Activated CD4-positive, alpha-beta memory T cell treated with anti-CD3 and anti-CD28 coated beads for 36 hours (primary cell): ENCODE measurements at regions of chr1 and their contacts with region 1.

Region 1: DNA sequence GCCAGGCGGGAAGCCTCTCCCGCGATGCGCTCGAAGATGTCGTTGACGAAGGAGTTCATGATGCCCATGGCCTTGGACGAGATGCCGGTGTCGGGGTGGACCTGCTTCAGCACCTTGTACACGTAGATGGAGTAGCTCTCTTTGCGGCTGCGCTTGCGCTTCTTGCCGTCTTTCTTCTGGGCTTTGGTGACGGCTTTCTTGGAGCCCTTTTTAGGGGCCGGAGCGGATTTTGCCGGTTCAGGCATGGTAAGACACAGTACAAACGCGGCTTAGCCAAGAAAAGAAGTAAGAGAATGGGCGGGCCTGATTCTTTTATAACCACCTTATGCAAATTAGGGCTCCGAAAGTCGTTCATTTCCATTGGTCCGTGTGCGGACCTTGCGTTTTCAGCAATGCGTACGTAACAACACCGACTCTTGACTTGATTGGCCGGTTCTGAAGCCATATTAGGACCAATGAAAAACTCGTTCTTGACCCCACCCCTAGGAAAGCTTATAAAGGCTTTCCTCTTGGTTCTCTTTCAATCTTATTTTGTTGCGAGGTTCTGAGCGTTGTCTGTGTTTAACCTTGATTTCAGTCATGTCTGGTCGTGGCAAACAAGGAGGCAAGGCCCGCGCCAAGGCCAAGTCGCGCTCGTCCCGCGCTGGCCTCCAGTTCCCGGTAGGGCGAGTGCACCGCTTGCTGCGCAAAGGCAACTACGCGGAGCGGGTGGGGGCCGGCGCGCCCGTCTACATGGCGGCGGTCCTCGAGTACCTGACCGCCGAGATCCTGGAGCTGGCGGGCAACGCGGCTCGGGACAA is 12.8 kb upstream of the BOLA1 start:
- DNase-seq: peak; percentile 91
- H3K4me3 Mint-ChIP-seq: no peak overlapping the region
- H3K27ac Mint-ChIP-seq: no peak overlapping the region
- H3K4me1 Mint-ChIP-seq: peaks cover 10% of the 10 kb centered on the region
- H3K27me3 Mint-ChIP-seq: no peaks in the 10 kb centered on the region

Region 2: DNA sequence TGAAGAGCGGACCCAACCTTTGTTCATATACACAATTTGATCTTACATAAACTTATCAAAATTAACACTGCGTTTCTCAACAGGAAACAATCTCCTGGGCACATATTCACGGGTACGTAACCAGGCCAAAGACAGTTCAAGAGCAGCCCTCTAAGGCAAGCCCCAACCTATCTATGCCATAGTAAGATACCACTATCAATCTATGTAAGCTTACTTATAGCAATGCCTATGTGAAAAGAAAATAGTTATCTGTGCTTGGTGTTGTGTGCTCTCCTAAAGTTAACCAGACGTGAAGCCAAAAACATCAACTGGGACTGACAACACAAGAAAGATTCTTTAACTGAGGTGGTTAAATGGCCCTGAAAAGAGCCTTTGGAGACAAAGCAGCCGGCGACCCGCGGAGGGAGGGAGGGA is 36.6 kb before region 1 on chr1:
- CTCF ChIA-PET with region 1: interaction called, 3 read pairs
- POLR2A ChIA-PET with region 1: interaction called, 118 read pairs
- intact Hi-C with region 1: no loop called
- DNase-seq: peak; percentile 19
- H3K4me3 Mint-ChIP-seq: peak overlapping the region; percentile 88
- H3K27ac Mint-ChIP-seq: peak overlapping the region; percentile 93
- H3K4me1 Mint-ChIP-seq: peaks cover 45% of the 10 kb centered on the region
- H3K27me3 Mint-ChIP-seq: no peaks in the 10 kb centered on the region

Region 3: DNA sequence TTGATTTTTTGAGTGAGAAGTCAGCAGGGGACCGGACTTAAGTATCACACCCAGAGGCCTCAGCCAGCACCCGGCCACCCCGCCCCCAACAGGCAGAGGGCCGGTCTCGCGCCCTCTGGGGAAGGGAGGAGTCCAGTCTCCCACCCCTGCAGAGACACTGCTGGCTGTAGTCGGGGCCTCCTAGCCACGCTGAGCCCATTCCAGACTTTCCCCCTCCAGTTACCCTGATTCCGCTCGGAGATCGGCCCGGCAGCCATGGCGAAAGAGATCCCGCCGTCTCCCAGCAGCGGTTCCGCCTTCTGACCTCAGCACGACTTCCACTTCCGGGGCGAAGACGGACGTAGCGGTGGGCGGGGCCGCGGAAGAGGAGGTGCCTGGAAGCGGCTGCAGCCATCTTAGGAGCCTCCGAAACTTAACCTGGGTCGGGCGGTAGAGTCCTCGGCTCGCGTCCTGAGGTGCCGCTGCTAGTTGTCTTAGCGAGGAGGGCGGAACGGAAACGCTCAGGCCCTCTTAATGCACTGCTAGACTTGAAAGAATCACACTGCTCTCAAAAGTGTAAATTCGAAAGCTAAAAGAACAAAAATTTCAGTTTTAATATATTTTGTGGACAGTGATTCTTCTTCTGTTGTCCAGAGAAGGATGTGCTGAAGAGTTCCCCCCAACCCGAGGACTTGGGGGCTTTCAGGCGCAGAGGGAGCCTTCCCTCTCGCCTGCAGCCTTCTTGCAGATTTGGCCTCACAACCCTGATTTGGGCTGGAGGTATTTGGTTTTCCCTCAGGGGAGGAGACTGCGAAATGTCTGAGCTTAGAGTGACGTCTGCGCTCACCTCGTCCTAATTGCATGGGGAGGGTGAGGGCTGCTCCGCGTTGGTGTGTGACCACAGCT is 41.1 kb after region 1 on chr1 and contains the start of gene SF3B4:
- CTCF ChIA-PET with region 1: interaction called, 4 read pairs
- POLR2A ChIA-PET with region 1: interaction called, 34 read pairs
- intact Hi-C with region 1: loop called (anchors 1 kb)
- DNase-seq: peak; percentile 97
- H3K4me3 Mint-ChIP-seq: peak within 1 kb of the TSS; percentile 98
- H3K27ac Mint-ChIP-seq: peak within 1 kb of the TSS; percentile 87
- H3K4me1 Mint-ChIP-seq: peaks cover 39% of the 10 kb centered on the region
- H3K27me3 Mint-ChIP-seq: no peaks in the 10 kb centered on the region
- total RNA-seq, gene SF3B4: 72.7 to 75.7 TPM

Region 4: DNA sequence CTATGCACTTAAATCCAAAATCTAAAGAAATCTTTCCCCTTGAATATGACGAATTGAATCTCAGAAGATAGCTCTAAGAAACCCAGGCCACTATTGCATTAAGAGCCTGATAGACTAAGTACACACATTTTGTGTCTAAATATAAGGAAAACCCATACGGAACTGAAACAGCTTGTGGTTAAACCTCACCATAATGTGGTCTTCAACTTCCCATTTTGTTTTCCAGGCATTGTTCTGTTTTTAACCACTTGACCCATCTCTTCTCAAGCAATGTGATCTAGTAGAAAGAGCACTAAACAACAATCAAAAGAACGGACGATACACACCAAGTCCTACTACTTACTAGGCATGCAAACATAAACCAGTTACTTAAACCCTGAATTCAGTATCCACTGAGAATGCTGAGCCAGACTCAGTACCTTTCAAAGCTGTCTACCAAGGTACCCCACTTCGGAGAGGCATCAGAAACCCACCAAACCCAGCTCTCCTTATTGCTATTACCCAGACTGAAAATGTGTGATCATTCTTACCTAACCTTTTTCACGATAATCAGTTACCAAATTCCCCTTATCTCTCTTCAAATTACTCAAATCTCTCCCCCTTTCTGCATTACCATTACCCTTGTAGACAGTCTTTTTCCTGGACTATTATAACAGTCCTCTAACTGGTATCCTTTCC is 111.1 kb after region 1 on chr1:
- CTCF ChIA-PET with region 1: no interaction called
- POLR2A ChIA-PET with region 1: interaction called, 22 read pairs
- intact Hi-C with region 1: no loop called
- DNase-seq: peak; percentile 29
- H3K4me3 Mint-ChIP-seq: no peak overlapping the region
- H3K27ac Mint-ChIP-seq: peak overlapping the region; percentile 29
- H3K4me1 Mint-ChIP-seq: peaks cover 58% of the 10 kb centered on the region
- H3K27me3 Mint-ChIP-seq: no peaks in the 10 kb centered on the region

Region 5: DNA sequence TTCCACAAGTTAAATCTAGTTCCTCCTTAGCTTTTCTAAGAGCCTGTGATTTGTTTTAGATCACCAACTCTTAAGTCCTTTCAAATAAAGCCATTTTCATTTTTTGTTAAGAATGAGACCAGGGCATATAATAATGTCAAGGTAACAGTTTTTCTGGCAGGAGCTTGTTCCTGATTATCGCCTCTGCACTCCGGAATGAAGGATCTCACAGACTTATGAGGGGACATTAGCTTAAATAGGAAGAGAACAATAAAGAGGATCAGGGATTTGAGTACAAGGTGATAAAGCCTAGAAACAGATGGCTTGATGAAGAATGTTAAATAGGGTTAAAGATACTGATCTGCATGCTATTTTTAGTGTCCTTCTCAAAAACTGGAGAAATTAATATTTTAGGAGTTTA is 137.6 kb after region 1 on chr1:
- CTCF ChIA-PET with region 1: no interaction called
- POLR2A ChIA-PET with region 1: no interaction called
- intact Hi-C with region 1: no loop called
- DNase-seq: no peak
- H3K4me3 Mint-ChIP-seq: no peak overlapping the region
- H3K27ac Mint-ChIP-seq: no peak overlapping the region
- H3K4me1 Mint-ChIP-seq: no peaks in the 10 kb centered on the region
- H3K27me3 Mint-ChIP-seq: no peaks in the 10 kb centered on the region

Region 6: GRCh38 chr1:150051089-150051373 is 164.4 kb after region 1 on chr1:
- CTCF ChIA-PET with region 1: interaction called, 4 read pairs
- POLR2A ChIA-PET with region 1: interaction called, 5 read pairs
- intact Hi-C with region 1: loop called (anchors 1 kb)
- DNase-seq: no peak
- H3K4me3 Mint-ChIP-seq: no peak overlapping the region
- H3K27ac Mint-ChIP-seq: no peak overlapping the region
- H3K4me1 Mint-ChIP-seq: no peaks in the 10 kb centered on the region
- H3K27me3 Mint-ChIP-seq: no peaks in the 10 kb centered on the region

Region 7: DNA sequence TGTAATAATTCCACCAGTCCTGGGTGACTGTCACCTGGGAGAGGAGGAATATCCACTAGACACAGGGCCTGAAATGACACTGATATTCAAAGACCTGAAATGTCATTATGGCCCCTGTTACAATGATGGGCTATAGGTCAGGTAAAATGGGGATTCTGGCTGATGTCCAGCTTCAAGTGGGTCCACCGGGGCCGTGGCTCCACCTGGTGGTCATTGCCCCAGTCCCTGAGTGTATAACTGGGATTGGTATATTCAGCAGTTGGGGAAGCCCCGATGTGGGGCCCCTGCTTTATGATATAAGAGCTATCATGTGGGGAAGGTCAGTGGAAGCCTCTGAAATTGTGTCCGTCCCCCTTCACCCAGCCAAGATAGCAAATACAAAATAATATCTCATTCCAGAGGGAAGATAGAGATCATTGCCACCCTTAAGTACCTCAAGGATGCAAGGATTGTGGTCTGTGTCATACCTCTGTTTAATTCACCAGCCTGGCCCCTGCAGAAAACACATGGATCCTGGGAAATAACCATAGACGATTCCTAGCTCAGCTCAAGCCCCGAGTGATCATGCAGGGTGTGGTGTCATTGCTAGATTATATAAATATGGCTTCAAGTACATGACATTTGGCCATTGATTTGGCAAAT is 282.5 kb after region 1 on chr1:
- CTCF ChIA-PET with region 1: interaction called, 9 read pairs
- POLR2A ChIA-PET with region 1: interaction called, 3 read pairs
- intact Hi-C with region 1: loop called (anchors 5 kb)
- DNase-seq: peak; percentile 76
- H3K4me3 Mint-ChIP-seq: no peak overlapping the region
- H3K27ac Mint-ChIP-seq: no peak overlapping the region
- H3K4me1 Mint-ChIP-seq: no peaks in the 10 kb centered on the region
- H3K27me3 Mint-ChIP-seq: no peaks in the 10 kb centered on the region

Region 8: GRCh38 chr1:150332651-150333290 is 446.2 kb after region 1 on chr1:
- CTCF ChIA-PET with region 1: no interaction called
- POLR2A ChIA-PET with region 1: no interaction called
- intact Hi-C with region 1: no loop called
- DNase-seq: no peak
- H3K4me3 Mint-ChIP-seq: no peak overlapping the region
- H3K27ac Mint-ChIP-seq: no peak overlapping the region
- H3K4me1 Mint-ChIP-seq: peaks cover 6% of the 10 kb centered on the region
- H3K27me3 Mint-ChIP-seq: no peaks in the 10 kb centered on the region